ENCODE measurements at regions of chr15 and their contacts with region 1.

Region 1: GRCh38 chr15:24956111-24956838 is 1.5 kb downstream of the SNRPN start:
- DNase-seq: peak; percentile 91
- H3K4me3 Mint-ChIP-seq: peak overlapping the region; percentile 96
- H3K27ac Mint-ChIP-seq: peak overlapping the region; percentile 94
- H3K4me1 Mint-ChIP-seq: peaks cover 11% of the 10 kb centered on the region
- H3K27me3 Mint-ChIP-seq: peaks cover 2% of the 10 kb centered on the region

Region 2: DNA sequence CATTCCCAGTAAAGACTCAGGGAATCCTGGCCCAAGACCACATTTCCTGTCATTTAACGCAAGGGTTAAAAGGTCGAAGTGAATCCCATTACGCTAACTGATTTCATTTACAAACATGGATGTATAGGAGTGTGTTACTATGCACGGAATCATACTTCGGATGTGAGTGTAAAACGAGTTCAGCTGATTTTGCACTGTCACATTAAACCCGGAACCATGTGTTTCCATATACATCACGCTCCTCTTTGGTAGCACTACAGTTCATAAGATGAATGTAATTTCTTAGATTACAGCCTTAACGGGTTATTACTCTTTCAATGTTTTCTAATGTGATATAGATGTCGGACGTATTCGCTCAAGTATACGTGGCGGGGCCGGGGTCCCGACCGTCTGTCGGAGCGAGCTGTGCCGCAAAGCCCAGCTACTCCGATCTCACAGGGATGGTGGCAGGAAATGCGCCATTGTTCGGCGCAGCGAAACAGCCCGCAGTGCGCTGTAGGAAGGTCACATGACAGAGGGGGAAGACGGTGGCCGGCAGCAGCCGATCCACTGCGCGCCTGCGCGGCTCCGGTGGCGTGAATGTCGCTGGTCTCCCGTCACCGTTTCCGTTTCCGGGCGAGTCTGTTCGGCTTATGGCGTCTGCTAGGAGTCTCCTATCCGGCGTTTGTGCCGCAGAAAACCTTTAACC is 183.4 kb before region 1 on chr15:
- intact Hi-C with region 1: loop called (anchors 10 kb)
- DNase-seq: peak; percentile 83
- H3K4me3 Mint-ChIP-seq: peak overlapping the region; percentile 87
- H3K27ac Mint-ChIP-seq: peak overlapping the region; percentile 88
- H3K4me1 Mint-ChIP-seq: peaks cover 2% of the 10 kb centered on the region
- H3K27me3 Mint-ChIP-seq: no peaks in the 10 kb centered on the region

Region 3: DNA sequence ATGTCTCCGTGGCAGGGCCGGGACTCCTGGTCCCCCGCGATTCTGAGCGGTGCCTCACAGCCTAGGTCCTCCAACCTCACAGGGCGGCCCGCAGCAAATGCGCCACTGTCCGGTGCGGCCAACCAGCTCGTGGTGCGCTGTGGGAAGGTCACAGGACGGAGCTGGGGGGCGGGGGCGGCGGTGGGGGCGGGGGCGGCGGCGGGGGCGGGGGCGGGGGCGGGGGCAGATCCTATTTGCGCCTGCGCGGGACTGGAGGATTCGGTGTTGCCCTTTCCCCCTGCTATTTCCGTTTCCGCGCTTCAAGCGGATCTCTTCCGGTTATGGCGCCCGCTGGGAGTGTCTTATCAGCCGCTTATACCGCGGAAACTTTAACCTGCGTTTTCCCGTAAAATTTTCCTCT is 108.2 kb before region 1 on chr15:
- intact Hi-C with region 1: no loop called
- DNase-seq: no peak
- H3K4me3 Mint-ChIP-seq: no peak overlapping the region
- H3K27ac Mint-ChIP-seq: no peak overlapping the region
- H3K4me1 Mint-ChIP-seq: no peaks in the 10 kb centered on the region
- H3K27me3 Mint-ChIP-seq: no peaks in the 10 kb centered on the region

Measured in activated CD4-positive, alpha-beta T cell treated with anti-CD3 and anti-CD28 coated beads, Interleukin-2, amount 10 ng/mL, durations not matched to agents 24 days and 14 days (primary cell).